ENCODE measurements at regions of chr1 and their contacts with region 1.

Region 1: GRCh38 chr1:160251687-160252526 is 10.4 kb downstream of the DCAF8 start:
- DNase-seq: peak; percentile 68
- H3K4me3 ChIP-seq: no peak overlapping the region
- H3K27ac ChIP-seq: no peak overlapping the region
- H3K4me1 ChIP-seq: peaks cover 0 to 17% of the 10 kb centered on the region in 2 experiments; a peak in 2 of 4 replicates
- H3K27me3 ChIP-seq: no peaks in the 10 kb centered on the region
- CTCF ChIP-seq: peak; percentile 84
- EP300 ChIP-seq: no peak
- RAD21 ChIP-seq: peak; percentile 92

Region 2: GRCh38 chr1:160085686-160086455 is 166.0 kb before region 1 on chr1:
- CTCF ChIA-PET with region 1: interaction called, 46 read pairs
- POLR2A ChIA-PET with region 1: no interaction called
- DNase-seq: peak; percentile 91
- H3K4me3 ChIP-seq: no peak overlapping the region
- H3K27ac ChIP-seq: no peak overlapping the region
- H3K4me1 ChIP-seq: peaks cover 0 to 13% of the 10 kb centered on the region in 2 experiments; a peak in 1 of 4 replicates
- H3K27me3 ChIP-seq: peaks cover 22% of the 10 kb centered on the region; the same call in 1 of the 2 replicates
- CTCF ChIP-seq: peak; percentile 78
- EP300 ChIP-seq: no peak
- RAD21 ChIP-seq: peak; percentile 76

Region 3: GRCh38 chr1:160117709-160118183 is 134.2 kb before region 1 on chr1:
- CTCF ChIA-PET with region 1: interaction called, 10 read pairs
- POLR2A ChIA-PET with region 1: no interaction called
- DNase-seq: no peak
- H3K4me3 ChIP-seq: no peak overlapping the region
- H3K27ac ChIP-seq: no peak overlapping the region
- H3K4me1 ChIP-seq: no peaks in the 10 kb centered on the region
- H3K27me3 ChIP-seq: peaks cover 11% of the 10 kb centered on the region; the same call in 1 of the 2 replicates
- CTCF ChIP-seq: no peak
- EP300 ChIP-seq: no peak
- RAD21 ChIP-seq: no peak

Region 4: DNA sequence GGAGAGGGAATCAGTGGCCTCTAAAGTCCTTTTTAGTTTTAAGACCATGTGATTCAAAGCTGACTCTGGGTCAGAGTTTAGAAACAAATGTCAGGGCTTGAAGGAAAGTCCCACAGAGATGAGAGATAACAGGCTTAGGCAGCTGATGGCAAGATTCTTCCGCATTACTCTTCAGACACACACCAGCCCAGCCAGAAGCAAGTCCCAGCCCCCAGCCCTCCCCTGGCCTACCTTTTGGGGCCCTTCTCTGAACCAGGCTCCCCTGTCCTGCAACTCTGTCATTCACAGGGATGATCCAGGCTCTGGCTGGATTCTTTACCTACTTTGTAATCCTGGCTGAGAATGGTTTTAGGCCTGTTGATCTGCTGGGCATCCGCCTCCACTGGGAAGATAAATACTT is 74.7 kb before region 1 on chr1:
- CTCF ChIA-PET with region 1: interaction called, 14 read pairs
- POLR2A ChIA-PET with region 1: no interaction called
- DNase-seq: no peak
- H3K4me3 ChIP-seq: no peak overlapping the region
- H3K27ac ChIP-seq: no peak overlapping the region
- H3K4me1 ChIP-seq: no peaks in the 10 kb centered on the region
- H3K27me3 ChIP-seq: no peaks in the 10 kb centered on the region; the same call in 1 of the 2 replicates
- CTCF ChIP-seq: no peak
- EP300 ChIP-seq: no peak
- RAD21 ChIP-seq: no peak

Region 5: DNA sequence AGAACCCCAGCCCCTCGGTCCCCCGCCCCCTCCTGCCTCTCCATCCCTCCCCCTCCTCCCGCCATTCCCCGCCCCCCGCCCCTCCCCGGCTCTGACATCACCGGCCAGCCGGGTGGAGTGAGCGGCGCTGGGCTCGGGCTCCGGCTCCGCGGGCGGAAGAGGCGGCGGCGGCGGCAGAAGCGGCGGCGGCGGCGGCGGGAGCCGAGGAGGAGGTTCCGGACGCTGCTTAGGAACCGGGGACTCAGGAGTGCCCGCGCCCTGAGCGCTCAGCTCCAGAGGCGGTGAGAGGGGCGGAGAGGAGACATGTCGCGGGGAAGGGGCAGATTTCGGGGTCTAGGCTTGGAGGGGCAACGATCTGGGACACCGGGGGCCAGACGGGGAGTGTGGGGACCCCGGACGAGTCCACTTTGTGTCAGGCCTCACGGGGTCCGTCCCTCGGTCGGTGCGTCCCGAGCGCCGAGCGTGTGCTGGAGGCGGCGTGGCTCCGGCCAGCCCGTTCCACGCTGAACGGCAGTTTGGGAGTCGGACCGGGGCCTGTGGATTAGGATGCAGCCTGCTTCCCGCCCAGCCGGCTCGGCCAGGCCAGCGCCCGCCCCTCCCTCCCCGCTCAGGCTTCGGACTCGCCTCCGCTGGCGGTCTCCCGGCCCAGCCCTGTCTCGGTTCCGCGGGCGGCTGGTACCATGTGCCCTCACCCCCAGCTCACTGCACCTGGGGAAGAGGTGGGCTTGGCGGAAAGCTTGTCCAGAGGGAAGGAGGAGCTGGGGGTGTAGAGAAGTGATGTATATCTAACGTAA is 46.5 kb before region 1 on chr1 and contains the start of gene PEA15:
- CTCF ChIA-PET with region 1: interaction called, 56 read pairs
- POLR2A ChIA-PET with region 1: interaction called, 6 read pairs
- DNase-seq: peak; percentile 96
- H3K4me3 ChIP-seq: peak within 1 kb of the TSS; percentile 94 to 97
- H3K27ac ChIP-seq: peak within 1 kb of the TSS; percentile 87 to 99
- H3K4me1 ChIP-seq: peaks cover 36 to 56% of the 10 kb centered on the region in 2 experiments
- H3K27me3 ChIP-seq: no peaks in the 10 kb centered on the region
- CTCF ChIP-seq: no peak
- EP300 ChIP-seq: peak in 1 of 2 experiments; percentile 39; a peak in 1 of 4 replicates
- RAD21 ChIP-seq: no peak
- polyA plus RNA-seq, gene PEA15: 322 and 382 TPM in 2 replicates

Region 6: GRCh38 chr1:160226623-160227022 is 25.3 kb before region 1 on chr1:
- CTCF ChIA-PET with region 1: interaction called, 73 read pairs
- POLR2A ChIA-PET with region 1: no interaction called
- DNase-seq: no peak
- H3K4me3 ChIP-seq: no peak overlapping the region
- H3K27ac ChIP-seq: no peak overlapping the region
- H3K4me1 ChIP-seq: no peaks in the 10 kb centered on the region
- H3K27me3 ChIP-seq: no peaks in the 10 kb centered on the region
- CTCF ChIP-seq: no peak
- EP300 ChIP-seq: no peak
- RAD21 ChIP-seq: no peak

Region 7: GRCh38 chr1:160238408-160238807 is 13.5 kb before region 1 on chr1:
- CTCF ChIA-PET with region 1: interaction called, 44 read pairs
- POLR2A ChIA-PET with region 1: no interaction called
- DNase-seq: no peak
- H3K4me3 ChIP-seq: no peak overlapping the region
- H3K27ac ChIP-seq: no peak overlapping the region
- H3K4me1 ChIP-seq: no peaks in the 10 kb centered on the region
- H3K27me3 ChIP-seq: no peaks in the 10 kb centered on the region
- CTCF ChIP-seq: no peak
- EP300 ChIP-seq: no peak
- RAD21 ChIP-seq: no peak

Region 8: GRCh38 chr1:160277330-160277729 is 25.4 kb after region 1 on chr1:
- CTCF ChIA-PET with region 1: no interaction called
- POLR2A ChIA-PET with region 1: no interaction called
- DNase-seq: no peak
- H3K4me3 ChIP-seq: no peak overlapping the region
- H3K27ac ChIP-seq: no peak overlapping the region
- H3K4me1 ChIP-seq: no peaks in the 10 kb centered on the region
- H3K27me3 ChIP-seq: no peaks in the 10 kb centered on the region
- CTCF ChIP-seq: no peak
- EP300 ChIP-seq: no peak
- RAD21 ChIP-seq: no peak

Region 9: GRCh38 chr1:160494620-160495019 is 242.7 kb after region 1 on chr1:
- CTCF ChIA-PET with region 1: no interaction called
- POLR2A ChIA-PET with region 1: no interaction called
- DNase-seq: no peak
- H3K4me3 ChIP-seq: no peak overlapping the region
- H3K27ac ChIP-seq: no peak overlapping the region
- H3K4me1 ChIP-seq: no peaks in the 10 kb centered on the region
- H3K27me3 ChIP-seq: no peaks in the 10 kb centered on the region
- CTCF ChIP-seq: peak; percentile 38; the same call in 1 of the 2 replicates
- EP300 ChIP-seq: no peak
- RAD21 ChIP-seq: no peak

Region 10: DNA sequence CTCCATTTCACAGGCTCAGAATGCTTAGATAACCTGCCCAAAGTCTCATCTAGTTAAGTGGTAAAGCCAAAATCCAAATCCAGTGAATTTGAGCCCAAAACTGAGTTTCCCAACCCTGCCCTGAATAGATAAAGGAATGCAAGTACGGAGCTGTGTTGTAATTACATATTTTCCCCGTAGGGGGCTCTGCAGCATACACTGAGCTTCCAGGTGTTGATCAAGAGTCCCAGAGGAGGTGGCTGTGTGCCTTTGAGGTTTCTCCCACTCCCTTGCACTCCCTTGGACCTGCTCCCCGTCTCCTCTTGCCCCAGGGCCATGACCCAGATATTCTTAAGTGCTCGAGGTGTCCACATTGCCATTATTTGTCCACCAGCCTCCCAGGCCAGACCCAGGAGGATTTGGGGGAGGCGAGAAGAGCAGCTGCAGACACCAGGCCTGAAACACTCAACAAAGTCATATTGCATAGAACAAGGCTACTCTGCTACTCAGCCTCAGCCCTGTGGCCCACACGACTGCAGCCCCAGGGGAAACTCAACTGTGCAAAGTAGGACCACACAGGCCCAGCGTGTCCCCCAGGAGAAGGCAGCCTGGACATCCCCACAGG is 525.7 kb after region 1 on chr1:
- CTCF ChIA-PET with region 1: no interaction called
- POLR2A ChIA-PET with region 1: no interaction called
- DNase-seq: peak; percentile 21
- H3K4me3 ChIP-seq: no peak overlapping the region
- H3K27ac ChIP-seq: no peak overlapping the region
- H3K4me1 ChIP-seq: no peaks in the 10 kb centered on the region
- H3K27me3 ChIP-seq: peaks cover 14% of the 10 kb centered on the region; the same call in 1 of the 2 replicates
- CTCF ChIP-seq: peak; percentile 47
- EP300 ChIP-seq: no peak
- RAD21 ChIP-seq: peak; percentile 36; the same call in 1 of the 2 replicates